ENCODE measurements at regions of chr17 and their contacts with region 1.

Region 1: GRCh38 chr17:71919186-71919585 is 201.6 kb upstream of the SOX9 start:
- DNase-seq: no peak

Region 2: GRCh38 chr17:71976011-71976649 is 56.9 kb after region 1 on chr17:
- intact Hi-C with region 1: loop called (anchors 10 kb)
- DNase-seq: peak; percentile 43 to 94 (median 64)

Measured in posterior cingulate gyrus (tissue), 11 donors.